Kidney (tissue), 22 donors: ENCODE measurements at regions of chr11 and their contacts with region 1.

Region 1: GRCh38 chr11:121655537-121656327 is 203.0 kb upstream of the SORL1-AS1 start:
- DNase-seq: peak; percentile 92 to 96 (median 94)
- H3K4me3 ChIP-seq: peak overlapping the region; percentile 74 to 82 (median 75)
- H3K27ac ChIP-seq: peak overlapping the region; percentile 54 to 86
- H3K4me1 ChIP-seq: peaks cover 2 to 7% (median 3%) of the 10 kb centered on the region in 3 donors
- H3K27me3 ChIP-seq: no peaks in the 10 kb centered on the region
- CTCF ChIP-seq: peak; percentile 93

Region 2: DNA sequence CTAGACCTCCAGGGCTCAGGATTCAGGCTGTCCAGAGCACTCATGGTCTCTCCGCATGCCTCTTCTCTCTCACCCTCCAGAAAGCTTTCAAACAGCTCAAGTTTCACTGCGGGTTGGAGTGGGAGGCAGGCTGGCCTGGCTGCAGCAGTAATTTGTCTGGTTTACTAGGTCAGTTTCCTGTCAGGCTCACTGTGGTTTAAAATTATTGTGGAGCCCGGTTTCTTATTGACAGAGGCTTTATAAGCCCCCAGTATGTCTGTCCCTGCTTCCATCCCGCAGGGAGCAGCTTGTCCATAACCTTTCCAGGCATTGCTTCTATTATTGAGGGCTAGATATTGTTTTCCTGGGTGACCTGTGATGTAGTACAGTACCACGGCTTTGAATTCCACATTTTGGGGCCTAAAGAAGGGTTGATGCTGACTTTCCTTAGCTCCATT is 32.3 kb after region 1 on chr11:
- intact Hi-C with region 1: no loop called
- DNase-seq: peak in 4 of 5 donors; percentile 80 to 95 (median 92)
- H3K4me3 ChIP-seq: no peak overlapping the region
- H3K27ac ChIP-seq: no peak overlapping the region
- H3K4me1 ChIP-seq: no peaks in the 10 kb centered on the region
- H3K27me3 ChIP-seq: no peaks in the 10 kb centered on the region
- CTCF ChIP-seq: no peak

Region 3: DNA sequence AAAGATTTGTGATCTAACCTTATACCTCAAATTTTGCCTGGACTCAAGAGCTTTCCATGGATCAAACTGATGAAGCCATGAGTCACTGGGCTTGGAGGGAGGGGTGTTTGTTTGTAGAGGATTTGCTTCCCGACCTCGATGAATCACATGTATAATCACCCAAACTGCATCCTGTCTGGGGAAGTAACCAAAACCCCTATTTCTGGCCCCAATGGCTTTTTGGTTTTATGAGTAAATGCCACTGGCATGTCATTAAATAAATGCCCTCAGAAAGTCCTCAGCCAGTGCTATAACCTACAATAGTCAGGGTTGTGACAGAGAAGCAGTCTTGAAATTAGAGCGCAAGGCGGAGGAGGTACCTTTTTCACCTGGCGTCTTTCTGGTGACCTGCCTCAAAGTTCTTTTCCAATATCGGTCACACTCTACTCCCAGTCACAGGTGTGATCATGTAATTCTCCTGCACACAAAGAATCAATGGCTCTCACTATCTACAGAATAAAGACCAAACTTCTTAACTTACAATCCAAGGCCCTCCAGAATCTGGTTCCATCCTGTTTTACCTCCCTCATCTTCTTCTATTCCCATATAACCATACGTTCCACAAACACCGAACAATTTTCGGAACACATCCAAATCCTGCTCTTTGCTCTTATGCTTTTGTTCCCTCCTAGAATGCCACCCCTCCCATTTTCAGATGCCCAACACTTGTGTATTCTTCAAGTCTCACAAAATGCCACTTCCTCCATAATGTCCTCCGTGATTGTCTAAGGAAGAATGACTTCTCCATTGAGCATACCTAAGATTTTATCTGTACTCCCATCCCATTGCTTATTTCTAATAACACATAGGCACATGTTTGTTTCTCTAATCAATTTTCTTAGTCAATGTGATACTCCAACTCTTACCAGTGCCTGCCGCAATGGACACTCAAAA is 541.6 kb after region 1 on chr11:
- intact Hi-C with region 1: loop called (anchors 5 kb)
- DNase-seq: no peak
- H3K4me3 ChIP-seq: no peak overlapping the region
- H3K27ac ChIP-seq: no peak overlapping the region
- H3K4me1 ChIP-seq: peaks cover 0 to 2% (median 0%) of the 10 kb centered on the region in 3 donors
- H3K27me3 ChIP-seq: no peaks in the 10 kb centered on the region
- CTCF ChIP-seq: no peak

Region 4: DNA sequence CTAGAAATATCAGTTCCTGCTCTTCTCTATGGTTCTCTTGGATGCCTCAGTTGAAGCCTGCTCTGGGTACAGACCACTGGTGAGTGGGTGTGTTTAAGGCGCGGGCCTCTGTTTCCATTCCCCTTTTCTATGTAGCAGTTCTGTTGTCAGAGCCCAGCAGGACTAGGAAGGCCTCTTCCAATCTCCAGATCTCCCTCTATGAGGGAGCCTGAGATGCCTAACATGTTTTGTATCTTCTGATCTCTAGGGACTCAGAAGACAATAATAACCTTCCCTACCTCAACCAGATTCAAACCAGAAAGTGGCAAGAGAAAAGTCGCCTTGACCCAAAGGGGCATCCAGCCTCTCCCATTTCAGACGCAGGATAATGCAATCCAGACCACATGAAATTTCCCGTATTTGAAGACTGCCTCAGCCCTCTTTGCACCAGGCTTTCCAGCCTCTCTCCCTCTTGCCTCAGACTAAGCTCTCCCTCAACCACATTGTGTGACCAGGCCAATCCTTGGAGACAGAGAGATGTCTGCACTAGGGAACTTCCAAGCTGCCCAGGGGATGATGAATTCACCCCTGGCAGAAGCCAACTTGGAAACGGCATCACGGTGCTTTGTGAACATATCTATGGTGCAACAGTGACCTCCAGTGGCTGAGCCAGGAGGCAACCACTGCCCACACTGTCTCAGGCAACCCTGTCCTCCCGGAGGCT is 849.7 kb after region 1 on chr11:
- intact Hi-C with region 1: loop called (anchors 10 kb)
- DNase-seq: peak; percentile 83 to 89 (median 85)
- H3K4me3 ChIP-seq: no peak overlapping the region
- H3K27ac ChIP-seq: no peak overlapping the region
- H3K4me1 ChIP-seq: no peaks in the 10 kb centered on the region
- H3K27me3 ChIP-seq: no peaks in the 10 kb centered on the region
- CTCF ChIP-seq: peak; percentile 93